GM12878 (cell line): ENCODE measurements at regions of chr7 and their contacts with region 1.

Region 1: DNA sequence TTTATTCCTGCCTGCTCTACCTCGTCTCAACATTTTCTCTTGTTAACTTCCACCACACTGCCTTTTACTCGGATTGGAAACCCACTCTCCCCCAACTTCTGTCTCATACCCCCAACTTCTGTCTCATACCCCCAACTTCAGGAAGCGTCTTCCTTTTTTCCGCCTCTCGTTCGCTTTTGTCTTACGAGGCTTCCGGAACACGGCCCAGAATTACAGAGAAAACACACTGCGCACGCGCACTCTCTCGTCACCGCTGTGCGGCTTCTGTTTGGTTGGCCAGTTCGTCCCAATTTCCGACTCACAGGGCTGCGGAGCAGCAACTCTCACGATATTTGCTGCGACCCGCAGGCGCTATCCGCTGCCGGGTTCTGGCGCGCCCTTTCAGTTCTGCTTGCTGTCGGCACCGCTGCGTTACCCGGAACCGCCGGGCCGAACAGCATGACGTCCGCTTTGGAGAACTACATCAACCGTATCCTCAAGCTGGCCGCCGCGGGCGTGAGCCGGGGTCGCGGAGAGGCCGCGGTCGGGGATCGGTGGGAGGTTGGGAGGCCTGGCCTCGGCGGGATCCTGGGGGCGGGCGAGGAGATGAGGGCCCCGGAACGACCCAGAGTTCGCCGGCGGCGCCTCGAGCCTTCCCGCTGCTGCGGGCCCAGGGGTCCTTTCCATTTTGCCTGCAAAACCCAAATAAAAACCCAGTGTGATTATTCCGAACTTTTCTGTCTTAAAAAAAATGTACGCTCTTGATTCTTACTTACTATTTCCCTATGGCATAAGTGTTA is at the start of gene LSM8:
- DNase-seq: peak; percentile 99
- ATAC-seq: peak; percentile 96
- H3K4me3 ChIP-seq: peak within 1 kb of the TSS; percentile 86
- H3K27ac ChIP-seq: peak within 1 kb of the TSS; percentile 93
- H3K4me1 ChIP-seq: no peaks in the 10 kb centered on the region
- H3K27me3 ChIP-seq: no peaks in the 10 kb centered on the region
- CTCF ChIP-seq: no peak
- EP300 ChIP-seq: 0 out of 4 replicates have a peak, but pooled peaks of 1 of the 2 experiments have one; percentile 1
- POLR2A ChIP-seq: peak; percentile 98
- RAD21 ChIP-seq: no peak
- polyA plus RNA-seq, gene LSM8: 127 to 140 TPM

Region 2: GRCh38 chr7:116862234-116862950 is 1321.6 kb before region 1 on chr7 and contains the start of gene CAPZA2:
- CTCF ChIA-PET with region 1: no interaction called
- POLR2A ChIA-PET with region 1: no interaction called
- RAD21 ChIA-PET with region 1: no interaction called
- SMC1A ChIA-PET with region 1: no interaction called
- in situ Hi-C with region 1: no loop called
- intact Hi-C with region 1: loop called (anchors 5 kb)
- DNase-seq: peak; percentile 53
- ATAC-seq: peak; percentile 91
- H3K4me3 ChIP-seq: peak within 1 kb of the TSS; percentile 100
- H3K27ac ChIP-seq: peak within 1 kb of the TSS; percentile 92
- H3K4me1 ChIP-seq: no peaks in the 10 kb centered on the region
- H3K27me3 ChIP-seq: no peaks in the 10 kb centered on the region
- CTCF ChIP-seq: peak in 2 of 3 experiments; percentile 11 to 34; a peak in 1 of 6 replicates
- EP300 ChIP-seq: no peak
- POLR2A ChIP-seq: peak; percentile 90
- RAD21 ChIP-seq: no peak
- polyA plus RNA-seq, gene CAPZA2: 159 to 379 TPM

Region 3: GRCh38 chr7:117014673-117015133 is 1169.3 kb before region 1 on chr7:
- CTCF ChIA-PET with region 1: no interaction called
- POLR2A ChIA-PET with region 1: interaction called, 4 read pairs
- RAD21 ChIA-PET with region 1: no interaction called
- SMC1A ChIA-PET with region 1: no interaction called
- in situ Hi-C with region 1: no loop called
- intact Hi-C with region 1: loop called (anchors 10 kb)
- DNase-seq: no peak
- ATAC-seq: peak; percentile 52
- H3K4me3 ChIP-seq: peak overlapping the region; percentile 66; the same call in 1 of the 2 replicates
- H3K27ac ChIP-seq: peak overlapping the region; percentile 79
- H3K4me1 ChIP-seq: peaks cover 43% of the 10 kb centered on the region
- H3K27me3 ChIP-seq: no peaks in the 10 kb centered on the region
- CTCF ChIP-seq: no peak
- EP300 ChIP-seq: no peak
- POLR2A ChIP-seq: peak; percentile 51; the same call in 1 of the 2 replicates
- RAD21 ChIP-seq: no peak

Region 4: DNA sequence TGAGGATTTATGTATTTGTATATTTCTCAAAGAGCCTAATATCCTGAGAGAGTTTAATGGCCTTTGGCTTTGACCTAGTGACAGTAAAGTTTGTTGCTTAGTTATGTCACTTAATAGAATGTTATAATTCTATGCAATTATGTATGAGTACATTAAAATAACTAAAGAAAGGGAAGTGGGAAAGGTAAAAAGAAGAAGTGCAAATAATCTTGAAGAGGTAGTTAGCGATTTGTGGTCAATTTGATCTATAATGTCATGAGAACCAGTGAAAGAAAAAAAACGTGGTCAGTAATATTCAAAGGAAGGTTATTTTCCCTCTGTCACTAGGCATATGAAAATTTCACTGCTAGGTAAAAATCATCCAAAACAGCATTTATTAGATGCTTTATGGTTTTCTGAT is 143.4 kb before region 1 on chr7:
- CTCF ChIA-PET with region 1: no interaction called
- POLR2A ChIA-PET with region 1: no interaction called
- RAD21 ChIA-PET with region 1: no interaction called
- SMC1A ChIA-PET with region 1: no interaction called
- in situ Hi-C with region 1: no loop called
- intact Hi-C with region 1: loop called (anchors 5 kb)
- DNase-seq: peak; percentile 25
- ATAC-seq: peak; percentile 88
- H3K4me3 ChIP-seq: no peak overlapping the region
- H3K27ac ChIP-seq: no peak overlapping the region; the same call in 1 of the 2 replicates
- H3K4me1 ChIP-seq: peaks cover 6% of the 10 kb centered on the region; the same call in 1 of the 2 replicates
- H3K27me3 ChIP-seq: no peaks in the 10 kb centered on the region
- CTCF ChIP-seq: no peak
- EP300 ChIP-seq: peak; percentile 83 to 88
- POLR2A ChIP-seq: no peak
- RAD21 ChIP-seq: no peak

Region 5: GRCh38 chr7:118195837-118196474 is 12.0 kb after region 1 on chr7:
- CTCF ChIA-PET with region 1: interaction called, 48 read pairs
- POLR2A ChIA-PET with region 1: interaction called, 4 read pairs
- RAD21 ChIA-PET with region 1: no interaction called
- SMC1A ChIA-PET with region 1: interaction called, 4 read pairs
- in situ Hi-C with region 1: no loop called
- intact Hi-C with region 1: no loop called
- DNase-seq: no peak
- ATAC-seq: peak; percentile 90
- H3K4me3 ChIP-seq: no peak overlapping the region
- H3K27ac ChIP-seq: no peak overlapping the region
- H3K4me1 ChIP-seq: no peaks in the 10 kb centered on the region
- H3K27me3 ChIP-seq: no peaks in the 10 kb centered on the region
- CTCF ChIP-seq: peak; percentile 69 to 75 (median 74)
- EP300 ChIP-seq: no peak
- POLR2A ChIP-seq: no peak
- RAD21 ChIP-seq: peak; percentile 66